ENCODE measurements at regions of chr9 and their contacts with region 1.

Region 1: DNA sequence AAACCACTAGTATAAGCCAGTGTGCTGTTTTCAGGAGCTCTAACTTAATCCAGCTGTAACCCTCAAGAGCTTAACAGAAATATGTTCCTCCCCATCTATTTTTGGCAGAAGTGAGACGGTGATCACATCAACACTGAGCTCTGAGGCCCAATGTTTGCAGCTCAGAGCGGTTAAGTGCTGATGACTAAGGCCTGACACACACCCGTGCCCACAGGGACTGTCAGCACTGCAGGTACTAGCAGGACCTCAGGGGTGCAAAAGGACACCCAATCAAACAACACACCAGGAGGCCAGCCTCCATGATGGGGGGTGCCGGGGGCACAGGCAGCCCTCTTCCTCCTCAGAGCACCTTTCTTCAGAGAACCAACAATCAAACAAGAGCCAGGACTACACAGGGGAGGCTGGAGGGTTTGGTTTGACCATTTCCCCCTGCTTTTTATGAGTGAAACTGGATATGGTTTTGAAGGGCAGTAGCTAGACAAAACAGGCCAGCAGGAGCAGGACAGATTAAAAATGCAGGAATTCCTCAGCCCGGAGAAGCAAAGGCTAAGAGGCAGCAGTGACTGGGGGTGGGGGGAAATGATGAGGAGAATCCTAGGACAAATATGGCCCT is 61.3 kb downstream of the RAPGEF1 start:
- DNase-seq: peak; percentile 29 to 88 (median 83)
- ATAC-seq: peak; percentile 90
- H3K4me3 ChIP-seq: no peak overlapping the region
- H3K4me3 Mint-ChIP-seq: peak overlapping the region; percentile 74
- H3K27ac ChIP-seq: peak overlapping the region; percentile 30 to 80
- H3K27ac Mint-ChIP-seq: peak overlapping the region; percentile 93
- H3K4me1 ChIP-seq: peaks cover 52% of the 10 kb centered on the region
- H3K4me1 Mint-ChIP-seq: peaks cover 76% of the 10 kb centered on the region
- H3K27me3 ChIP-seq: no peaks in the 10 kb centered on the region
- H3K27me3 Mint-ChIP-seq: no peaks in the 10 kb centered on the region
- CTCF ChIP-seq: no peak

Region 2: GRCh38 chr9:131590908-131591844 is 87.4 kb before region 1 on chr9:
- CTCF ChIA-PET with region 1: interaction called, 25 read pairs
- POLR2A ChIA-PET with region 1: no interaction called
- intact Hi-C with region 1: no loop called
- DNase-seq: peak; percentile 56 to 88 (median 79)
- ATAC-seq: peak; percentile 91
- H3K4me3 ChIP-seq: no peak overlapping the region
- H3K4me3 Mint-ChIP-seq: no peak overlapping the region
- H3K27ac ChIP-seq: peak overlapping the region in 1 of 2 experiments; percentile 19
- H3K27ac Mint-ChIP-seq: peak overlapping the region; percentile 88
- H3K4me1 ChIP-seq: peaks cover 18% of the 10 kb centered on the region
- H3K4me1 Mint-ChIP-seq: peaks cover 23% of the 10 kb centered on the region
- H3K27me3 ChIP-seq: no peaks in the 10 kb centered on the region
- H3K27me3 Mint-ChIP-seq: no peaks in the 10 kb centered on the region
- CTCF ChIP-seq: peak; percentile 83

Region 3: DNA sequence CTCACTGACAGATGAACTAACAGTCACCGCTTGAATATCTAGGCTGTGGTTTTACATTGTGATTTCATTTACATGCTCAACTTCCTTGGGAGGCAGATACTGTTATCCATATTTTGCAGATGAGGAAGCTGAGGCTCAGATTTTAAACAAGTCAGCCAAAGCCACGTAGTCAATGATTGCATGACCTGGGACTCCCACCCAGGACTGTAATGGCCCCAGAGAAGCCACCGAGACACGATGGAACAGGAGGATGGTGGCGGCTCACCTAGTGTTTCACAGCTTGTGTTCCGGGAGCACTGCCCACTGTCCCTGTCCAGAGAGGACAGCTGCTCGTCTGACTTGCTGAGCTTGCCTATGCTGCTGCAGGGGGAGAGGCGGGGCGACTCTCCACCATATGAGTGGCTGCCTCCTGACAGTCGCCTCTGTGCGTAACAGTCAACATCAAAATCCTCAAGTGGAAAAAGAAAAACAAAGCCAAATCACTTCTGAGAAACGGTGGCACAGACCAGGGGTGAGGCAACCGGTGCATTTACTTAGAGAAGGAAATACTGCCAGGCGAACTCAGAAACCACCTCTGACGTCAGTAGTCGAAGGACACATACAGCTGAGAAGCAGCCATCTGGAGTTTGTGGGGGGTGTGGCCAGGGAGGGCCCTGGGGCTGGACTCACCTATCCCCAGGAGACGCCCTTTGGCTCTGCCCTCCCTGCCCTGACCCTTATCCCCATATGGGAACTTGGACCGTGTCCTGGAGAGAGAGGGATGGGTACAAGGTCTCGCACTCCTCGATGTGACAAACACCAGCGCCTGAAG is 50.8 kb before region 1 on chr9:
- CTCF ChIA-PET with region 1: interaction called, 3 read pairs
- POLR2A ChIA-PET with region 1: interaction called, 3 read pairs
- intact Hi-C with region 1: loop called in 1 of 2 experiments (anchors 2 kb)
- DNase-seq: peak in 8 of 9 experiments; percentile 39 to 96 (median 72)
- ATAC-seq: peak; percentile 79
- H3K4me3 ChIP-seq: peak overlapping the region; percentile 7 to 29
- H3K4me3 Mint-ChIP-seq: peak overlapping the region; percentile 39
- H3K27ac ChIP-seq: peak overlapping the region; percentile 77 to 89
- H3K27ac Mint-ChIP-seq: peak overlapping the region; percentile 93
- H3K4me1 ChIP-seq: peaks cover 27% of the 10 kb centered on the region
- H3K4me1 Mint-ChIP-seq: peaks cover 34% of the 10 kb centered on the region
- H3K27me3 ChIP-seq: no peaks in the 10 kb centered on the region
- H3K27me3 Mint-ChIP-seq: no peaks in the 10 kb centered on the region
- CTCF ChIP-seq: no peak

Region 4: GRCh38 chr9:131635285-131635684 is 43.3 kb before region 1 on chr9:
- CTCF ChIA-PET with region 1: interaction called, 3 read pairs
- POLR2A ChIA-PET with region 1: interaction called, 3 read pairs
- intact Hi-C with region 1: loop called in 1 of 2 experiments (anchors 2 kb)
- DNase-seq: peak; percentile 42 to 92 (median 76)
- ATAC-seq: peak; percentile 99
- H3K4me3 ChIP-seq: no peak overlapping the region
- H3K4me3 Mint-ChIP-seq: no peak overlapping the region
- H3K27ac ChIP-seq: peak overlapping the region in 1 of 2 experiments; percentile 74
- H3K27ac Mint-ChIP-seq: peak overlapping the region; percentile 89
- H3K4me1 ChIP-seq: peaks cover 16% of the 10 kb centered on the region
- H3K4me1 Mint-ChIP-seq: peaks cover 30% of the 10 kb centered on the region
- H3K27me3 ChIP-seq: no peaks in the 10 kb centered on the region
- H3K27me3 Mint-ChIP-seq: no peaks in the 10 kb centered on the region
- CTCF ChIP-seq: no peak

Region 5: DNA sequence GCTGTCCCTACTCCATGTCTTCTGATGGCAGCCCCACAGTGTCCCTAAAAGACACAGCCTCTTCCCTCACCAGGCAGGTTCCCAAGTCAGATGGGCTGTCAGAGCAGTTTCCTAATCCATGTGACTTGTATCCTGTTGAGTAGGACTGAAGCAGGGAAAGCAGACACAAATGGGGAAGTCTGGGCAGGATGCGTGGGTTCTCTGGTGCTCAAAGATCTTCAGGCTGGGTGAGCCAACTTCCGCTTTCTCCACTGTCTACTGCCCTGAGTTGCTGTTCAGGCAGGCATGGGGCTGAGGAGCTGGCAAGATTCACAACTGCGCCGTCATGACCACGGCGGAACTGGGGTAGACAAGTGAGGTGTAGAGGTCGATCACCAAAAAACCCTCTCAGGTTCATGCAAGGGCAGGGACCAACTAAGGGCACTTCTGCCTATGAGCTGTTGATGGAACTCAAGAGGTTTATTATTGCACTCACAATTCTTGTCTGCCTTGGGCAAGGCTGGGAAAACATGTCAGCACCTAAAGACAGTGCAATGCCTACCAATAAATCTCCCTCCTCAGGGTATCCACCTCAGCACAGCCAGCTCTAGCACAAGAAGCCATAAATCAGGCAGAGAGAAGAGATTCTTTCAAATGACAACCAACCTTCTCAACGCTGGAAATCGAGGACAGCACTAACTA is 22.1 kb before region 1 on chr9:
- CTCF ChIA-PET with region 1: interaction called, 3 read pairs
- POLR2A ChIA-PET with region 1: interaction called, 5 read pairs
- intact Hi-C with region 1: loop called (anchors 2 kb)
- DNase-seq: peak; percentile 53 to 90 (median 71)
- ATAC-seq: peak; percentile 84
- H3K4me3 ChIP-seq: no peak overlapping the region
- H3K4me3 Mint-ChIP-seq: peak overlapping the region; percentile 46
- H3K27ac ChIP-seq: peak overlapping the region; percentile 16 to 73
- H3K27ac Mint-ChIP-seq: peak overlapping the region; percentile 96
- H3K4me1 ChIP-seq: peaks cover 33% of the 10 kb centered on the region
- H3K4me1 Mint-ChIP-seq: peaks cover 70% of the 10 kb centered on the region
- H3K27me3 ChIP-seq: no peaks in the 10 kb centered on the region
- H3K27me3 Mint-ChIP-seq: no peaks in the 10 kb centered on the region
- CTCF ChIP-seq: no peak

Region 6: GRCh38 chr9:131697097-131697496 is 18.5 kb after region 1 on chr9:
- CTCF ChIA-PET with region 1: interaction called, 10 read pairs
- POLR2A ChIA-PET with region 1: interaction called, 7 read pairs
- intact Hi-C with region 1: no loop called
- DNase-seq: no peak
- ATAC-seq: no peak
- H3K4me3 ChIP-seq: no peak overlapping the region
- H3K4me3 Mint-ChIP-seq: no peak overlapping the region
- H3K27ac ChIP-seq: no peak overlapping the region
- H3K27ac Mint-ChIP-seq: no peak overlapping the region
- H3K4me1 ChIP-seq: peaks cover 35% of the 10 kb centered on the region
- H3K4me1 Mint-ChIP-seq: peaks cover 84% of the 10 kb centered on the region
- H3K27me3 ChIP-seq: no peaks in the 10 kb centered on the region
- H3K27me3 Mint-ChIP-seq: no peaks in the 10 kb centered on the region
- CTCF ChIP-seq: no peak

Region 7: DNA sequence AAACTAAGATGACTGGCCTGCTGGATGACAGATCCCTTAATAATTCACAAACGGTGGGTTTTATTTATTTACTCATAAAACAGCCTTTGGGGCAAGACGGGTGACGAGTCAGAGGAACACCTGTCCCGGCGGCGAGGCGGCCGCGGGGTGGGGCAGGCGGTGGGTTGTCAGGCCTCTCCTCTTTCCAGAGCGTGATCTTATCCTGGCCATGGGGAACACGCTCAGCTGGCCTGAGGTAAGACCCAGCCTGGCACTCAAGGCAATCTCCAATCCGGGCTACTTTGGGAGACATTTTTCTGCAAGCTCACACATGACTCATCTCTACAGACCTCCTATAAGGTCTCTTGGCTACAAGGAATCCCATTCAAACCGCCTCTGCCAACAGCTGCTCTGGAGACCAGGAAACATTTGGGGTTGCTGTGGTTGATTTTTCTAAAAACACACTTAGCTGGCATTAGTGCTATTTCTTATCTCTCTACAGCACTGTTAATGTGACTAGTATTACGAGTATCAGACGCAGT is 55.0 kb after region 1 on chr9:
- CTCF ChIA-PET with region 1: interaction called, 15 read pairs
- POLR2A ChIA-PET with region 1: interaction called, 38 read pairs
- intact Hi-C with region 1: loop called in 1 of 2 experiments (anchors 2 kb)
- DNase-seq: peak in 5 of 9 experiments; percentile 32 to 82 (median 59)
- ATAC-seq: peak; percentile 10
- H3K4me3 ChIP-seq: peak overlapping the region; percentile 11 to 17
- H3K4me3 Mint-ChIP-seq: peak overlapping the region; percentile 77
- H3K27ac ChIP-seq: peak overlapping the region; percentile 32 to 73
- H3K27ac Mint-ChIP-seq: peak overlapping the region; percentile 98
- H3K4me1 ChIP-seq: peaks cover 91% of the 10 kb centered on the region
- H3K4me1 Mint-ChIP-seq: peaks cover 87% of the 10 kb centered on the region
- H3K27me3 ChIP-seq: no peaks in the 10 kb centered on the region
- H3K27me3 Mint-ChIP-seq: no peaks in the 10 kb centered on the region
- CTCF ChIP-seq: no peak